ENCODE measurements at regions of chr11 and their contacts with region 1.

Region 1: GRCh38 chr11:122853971-122854446 is 15.7 kb downstream of the CRTAM start:
- DNase-seq: no peak
- H3K4me3 ChIP-seq: no peak overlapping the region
- H3K27ac ChIP-seq: no peak overlapping the region
- H3K4me1 ChIP-seq: no peaks in the 10 kb centered on the region
- H3K27me3 ChIP-seq: no peaks in the 10 kb centered on the region
- CTCF ChIP-seq: peak; percentile 28 to 65 (median 49)

Region 2: DNA sequence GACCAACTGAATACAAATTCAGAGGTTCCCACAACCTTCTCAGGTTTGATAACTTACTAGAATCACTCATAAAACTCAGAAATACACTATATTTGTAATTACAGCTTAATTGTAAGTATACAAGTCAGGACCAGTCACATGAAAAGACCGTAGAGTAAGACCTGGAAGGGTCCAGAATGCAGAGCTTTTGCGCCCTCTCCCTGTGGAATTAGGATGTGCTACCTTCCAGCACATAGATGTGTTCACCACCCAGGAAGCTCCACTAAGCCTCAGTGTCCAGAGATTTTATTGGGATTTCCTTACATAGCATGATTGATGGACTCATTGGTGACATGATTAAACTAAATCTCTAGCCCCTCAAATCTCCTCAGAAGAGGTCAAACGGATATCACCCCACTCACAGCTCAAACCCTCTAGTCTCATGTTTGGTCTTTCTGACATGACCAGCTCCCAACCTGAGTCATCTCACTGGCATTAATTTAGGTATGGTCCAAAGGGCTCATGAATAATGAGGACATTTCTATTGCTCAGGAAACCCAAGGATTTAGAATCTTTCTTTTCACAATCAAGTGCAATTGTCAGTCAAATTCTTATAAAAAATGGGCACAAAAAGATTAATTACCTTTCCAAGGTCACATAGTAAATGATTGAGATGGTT is 275.7 kb before region 1 on chr11:
- intact Hi-C with region 1: loop called (anchors 2 kb)
- DNase-seq: no peak
- H3K4me3 ChIP-seq: no peak overlapping the region
- H3K27ac ChIP-seq: no peak overlapping the region
- H3K4me1 ChIP-seq: no peaks in the 10 kb centered on the region
- H3K27me3 ChIP-seq: no peaks in the 10 kb centered on the region
- CTCF ChIP-seq: no peak

Region 3: DNA sequence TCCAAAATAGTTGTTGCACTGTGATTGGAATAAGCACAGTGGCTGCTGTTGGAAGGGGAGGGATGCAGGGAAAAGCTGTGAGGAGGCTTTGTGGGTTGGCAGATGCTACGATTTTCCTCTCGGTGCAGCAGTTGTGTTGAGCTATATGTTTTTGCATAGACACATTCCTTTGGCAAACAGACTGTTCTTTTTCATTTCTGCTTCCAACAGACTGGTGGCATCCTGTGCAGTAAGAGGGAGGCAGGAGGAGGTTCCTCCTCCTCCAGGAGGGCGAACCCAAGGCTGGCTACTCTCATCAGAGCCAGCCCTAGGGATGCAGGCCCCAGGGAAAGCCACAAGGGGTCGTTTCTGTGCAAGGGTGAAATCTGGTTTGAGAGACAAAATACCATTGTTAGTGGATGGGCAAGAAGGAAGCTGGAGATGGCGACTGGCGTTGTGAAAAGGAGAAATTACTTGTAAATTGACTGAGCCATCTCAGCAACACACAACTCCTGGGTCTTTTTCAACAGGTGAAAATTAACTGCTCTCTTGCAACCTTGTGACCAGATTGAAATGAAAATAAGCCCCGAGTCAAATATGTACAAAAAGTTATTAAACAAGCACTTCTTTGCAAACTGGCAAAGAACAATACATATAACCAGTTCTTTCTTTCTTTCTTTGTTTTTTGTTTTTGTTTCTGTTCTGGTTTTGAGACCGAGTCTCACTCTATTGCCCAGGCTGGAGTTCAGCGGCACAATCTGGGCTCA is 225.0 kb before region 1 on chr11:
- intact Hi-C with region 1: loop called (anchors 1 kb)
- DNase-seq: peak in 1 of 2 donors; percentile 77
- H3K4me3 ChIP-seq: no peak overlapping the region
- H3K27ac ChIP-seq: no peak overlapping the region
- H3K4me1 ChIP-seq: peaks cover 0 to 3% of the 10 kb centered on the region in 2 donors
- H3K27me3 ChIP-seq: no peaks in the 10 kb centered on the region
- CTCF ChIP-seq: peak; percentile 70 to 76 (median 71)

Region 4: DNA sequence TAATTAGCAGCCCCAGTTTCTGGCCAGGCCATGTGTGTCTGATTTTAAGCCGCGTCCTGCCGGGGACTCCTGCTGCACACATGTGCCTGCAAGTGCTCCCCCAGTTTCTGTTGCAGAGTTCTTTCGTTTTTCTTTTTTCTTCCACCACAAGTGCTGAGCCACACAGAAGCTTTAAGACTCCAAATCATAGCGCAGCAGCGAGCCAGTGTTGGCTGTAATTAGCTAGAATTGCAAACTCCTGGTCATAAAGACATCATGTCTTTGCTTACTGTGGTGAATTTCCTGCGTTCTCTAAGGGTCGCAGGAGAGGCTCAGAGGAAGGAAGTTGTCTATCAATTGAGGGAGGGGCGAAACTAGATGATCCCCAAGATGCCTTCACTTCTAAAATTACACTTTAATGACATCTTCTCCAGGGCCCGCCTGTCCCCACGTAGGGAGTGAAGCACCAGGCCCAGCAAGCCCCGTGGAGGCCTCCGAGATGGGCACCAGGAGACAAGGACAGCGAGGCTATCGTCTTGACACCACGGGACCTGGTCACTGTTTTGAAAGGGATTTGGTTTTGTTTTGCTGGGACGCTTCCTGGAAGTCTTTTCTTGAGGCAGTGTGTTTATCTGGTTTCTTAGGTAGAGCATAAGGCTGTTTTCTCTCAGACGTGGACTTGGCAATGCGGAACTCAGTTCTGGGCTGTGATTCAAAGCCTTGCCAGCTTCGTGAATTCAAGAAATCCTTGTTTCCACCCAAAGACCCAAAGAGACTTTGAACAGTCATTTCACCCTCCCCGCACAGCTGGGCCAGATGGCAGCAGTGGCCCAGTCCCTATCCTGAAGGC is 126.7 kb before region 1 on chr11:
- intact Hi-C with region 1: no loop called
- DNase-seq: no peak
- H3K4me3 ChIP-seq: no peak overlapping the region
- H3K27ac ChIP-seq: no peak overlapping the region
- H3K4me1 ChIP-seq: no peaks in the 10 kb centered on the region
- H3K27me3 ChIP-seq: no peaks in the 10 kb centered on the region
- CTCF ChIP-seq: no peak

Measured in ascending aorta (tissue), 2 donors.